CD4-positive, alpha-beta memory T cell (primary cell): ENCODE measurements at regions of chr1 and their contacts with region 1.

Region 1: GRCh38 chr1:110879758-110880606 is 7.0 kb downstream of the CD53 start:
- DNase-seq: peak; percentile 43 to 88 (median 50)
- H3K4me3 ChIP-seq: peak overlapping the region; percentile 6 to 26
- H3K4me3 Mint-ChIP-seq: peak overlapping the region; percentile 75 to 91 (median 86)
- H3K27ac ChIP-seq: peak overlapping the region; percentile 70
- H3K27ac Mint-ChIP-seq: peak overlapping the region; percentile 92 to 99 (median 98)
- H3K4me1 ChIP-seq: peaks cover 91% of the 10 kb centered on the region
- H3K4me1 Mint-ChIP-seq: peaks cover 66 to 91% (median 78%) of the 10 kb centered on the region in 4 donors
- H3K27me3 ChIP-seq: no peaks in the 10 kb centered on the region
- H3K27me3 Mint-ChIP-seq: no peaks in the 10 kb centered on the region

Region 2: GRCh38 chr1:110896090-110896489 is 16.1 kb after region 1 on chr1:
- CTCF ChIA-PET with region 1: interaction called, 8 read pairs
- POLR2A ChIA-PET with region 1: interaction called, 7 read pairs
- intact Hi-C with region 1: loop called (anchors 1 kb)
- DNase-seq: peak; percentile 47 to 64 (median 55)
- H3K4me3 ChIP-seq: no peak overlapping the region
- H3K4me3 Mint-ChIP-seq: peak overlapping the region; percentile 17 to 73 (median 65)
- H3K27ac ChIP-seq: peak overlapping the region; percentile 27
- H3K27ac Mint-ChIP-seq: peak overlapping the region; percentile 78 to 95 (median 93)
- H3K4me1 ChIP-seq: peaks cover 80% of the 10 kb centered on the region
- H3K4me1 Mint-ChIP-seq: peaks cover 68 to 86% (median 78%) of the 10 kb centered on the region in 4 donors
- H3K27me3 ChIP-seq: no peaks in the 10 kb centered on the region
- H3K27me3 Mint-ChIP-seq: no peaks in the 10 kb centered on the region

Region 3: DNA sequence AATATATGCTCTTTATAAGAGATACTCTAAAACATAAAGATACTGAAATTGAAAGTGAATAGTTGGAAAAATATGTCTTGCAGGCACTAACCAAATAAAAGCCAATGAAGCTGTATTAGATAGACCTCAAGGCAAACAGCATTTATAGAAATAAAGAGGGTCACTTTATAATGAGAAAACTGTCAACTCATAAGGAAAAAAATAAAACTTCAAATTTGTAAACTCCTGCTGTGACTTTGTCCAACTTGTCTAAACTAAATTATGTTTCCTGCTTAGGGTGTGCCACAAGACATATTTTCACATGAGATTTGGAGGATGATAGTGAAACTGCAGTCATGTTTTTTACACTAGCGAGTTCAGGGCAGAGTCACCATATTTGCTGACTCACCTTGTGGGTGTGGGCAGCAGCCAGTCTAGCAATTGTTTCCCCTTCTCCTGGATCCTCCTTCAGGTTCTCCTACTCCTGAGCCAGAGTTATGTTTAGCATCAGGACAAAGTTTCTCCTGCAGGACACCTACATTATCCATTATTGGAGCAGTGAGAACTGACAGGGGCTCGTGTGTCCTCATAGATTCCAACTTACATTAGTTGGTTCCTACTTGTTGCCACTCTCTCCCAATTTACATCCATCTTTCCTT is 36.8 kb after region 1 on chr1:
- CTCF ChIA-PET with region 1: no interaction called
- POLR2A ChIA-PET with region 1: interaction called, 8 read pairs
- intact Hi-C with region 1: loop called (anchors 5 kb)
- DNase-seq: peak in 2 of 5 donors; percentile 15 to 19
- H3K4me3 ChIP-seq: no peak overlapping the region
- H3K4me3 Mint-ChIP-seq: peak overlapping the region in 5 of 8 donors; percentile 1 to 41 (median 10)
- H3K27ac ChIP-seq: no peak overlapping the region
- H3K27ac Mint-ChIP-seq: peak overlapping the region in 1 of 7 donors; percentile 19
- H3K4me1 ChIP-seq: peaks cover 15% of the 10 kb centered on the region
- H3K4me1 Mint-ChIP-seq: peaks cover 8 to 15% (median 11%) of the 10 kb centered on the region in 4 donors
- H3K27me3 ChIP-seq: no peaks in the 10 kb centered on the region
- H3K27me3 Mint-ChIP-seq: peaks cover 0 to 1% of the 10 kb centered on the region in 2 donors

Region 4: DNA sequence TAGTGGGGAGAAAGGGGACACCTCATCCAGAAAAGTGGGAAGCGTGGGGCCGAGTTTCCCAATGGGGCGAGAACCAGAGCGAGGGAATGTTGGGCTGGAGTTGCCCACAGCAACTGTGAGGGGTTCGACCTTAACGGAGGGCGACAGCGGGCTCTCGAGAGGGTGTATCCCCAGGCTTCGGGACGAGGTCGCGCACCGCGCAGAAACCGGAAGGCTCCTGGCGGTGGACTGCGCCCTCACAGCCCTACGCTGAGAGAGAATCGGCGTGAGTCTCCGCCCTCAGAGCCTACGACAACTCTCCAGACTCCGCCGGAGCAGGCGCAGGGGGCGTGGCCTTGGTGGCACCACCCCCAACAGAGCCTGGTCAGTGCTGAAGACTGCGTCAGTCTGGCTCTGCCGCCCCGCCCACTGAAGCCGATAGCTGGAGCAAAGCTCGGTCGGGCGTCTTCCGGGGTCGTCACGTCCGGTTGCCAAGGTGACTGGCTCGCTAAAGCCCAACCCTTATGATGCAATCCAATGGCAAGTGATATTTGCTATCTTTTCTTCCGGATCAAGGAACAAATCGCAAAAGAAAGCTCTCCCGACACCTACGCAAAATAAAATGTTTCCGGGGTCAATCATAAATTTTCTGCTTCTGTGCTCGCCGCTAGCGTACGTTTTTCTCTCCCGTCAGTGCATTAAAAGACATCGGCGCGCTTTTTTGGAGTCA is 83.9 kb after region 1 on chr1 and contains the start of gene LRIF1:
- CTCF ChIA-PET with region 1: interaction called, 6 read pairs
- POLR2A ChIA-PET with region 1: interaction called, 61 read pairs
- intact Hi-C with region 1: no loop called
- DNase-seq: peak; percentile 98 to 100 (median 100)
- H3K4me3 ChIP-seq: peak within 1 kb of the TSS; percentile 90 to 95
- H3K4me3 Mint-ChIP-seq: peak within 1 kb of the TSS; percentile 81 to 96 (median 92)
- H3K27ac ChIP-seq: peak within 1 kb of the TSS; percentile 96
- H3K27ac Mint-ChIP-seq: peak within 1 kb of the TSS; percentile 93 to 100 (median 98)
- H3K4me1 ChIP-seq: peaks cover 31% of the 10 kb centered on the region
- H3K4me1 Mint-ChIP-seq: peaks cover 20 to 35% (median 27%) of the 10 kb centered on the region in 4 donors
- H3K27me3 ChIP-seq: peaks cover 3% of the 10 kb centered on the region
- H3K27me3 Mint-ChIP-seq: peaks cover 8 to 10% of the 10 kb centered on the region in 2 donors
- total RNA-seq, gene LRIF1: 27.0 to 28.2 TPM

Region 5: GRCh38 chr1:111222308-111223125 is 342.5 kb after region 1 on chr1:
- CTCF ChIA-PET with region 1: no interaction called
- POLR2A ChIA-PET with region 1: no interaction called
- intact Hi-C with region 1: no loop called
- DNase-seq: peak; percentile 63 to 75 (median 68)
- H3K4me3 ChIP-seq: peak overlapping the region; percentile 25 to 39
- H3K4me3 Mint-ChIP-seq: peak overlapping the region; percentile 79 to 95 (median 85)
- H3K27ac ChIP-seq: peak overlapping the region; percentile 54
- H3K27ac Mint-ChIP-seq: peak overlapping the region; percentile 89 to 100 (median 96)
- H3K4me1 ChIP-seq: peaks cover 98% of the 10 kb centered on the region
- H3K4me1 Mint-ChIP-seq: peaks cover 76 to 97% (median 89%) of the 10 kb centered on the region in 4 donors
- H3K27me3 ChIP-seq: no peaks in the 10 kb centered on the region
- H3K27me3 Mint-ChIP-seq: no peaks in the 10 kb centered on the region